ENCODE measurements at regions of chr10 and their contacts with region 1.

Region 1: GRCh38 chr10:77939561-77940001 is 13.0 kb upstream of the DLG5 start:
- H3K4me3 ChIP-seq: no peak overlapping the region
- H3K27ac ChIP-seq: no peak overlapping the region
- H3K4me1 ChIP-seq: no peaks in the 10 kb centered on the region
- CTCF ChIP-seq: no peak

Region 2: GRCh38 chr10:77574438-77574837 is 365.1 kb before region 1 on chr10:
- CTCF ChIA-PET with region 1: no interaction called
- POLR2A ChIA-PET with region 1: no interaction called
- H3K4me3 ChIP-seq: no peak overlapping the region
- H3K27ac ChIP-seq: no peak overlapping the region
- H3K4me1 ChIP-seq: no peaks in the 10 kb centered on the region
- CTCF ChIP-seq: no peak

Region 3: DNA sequence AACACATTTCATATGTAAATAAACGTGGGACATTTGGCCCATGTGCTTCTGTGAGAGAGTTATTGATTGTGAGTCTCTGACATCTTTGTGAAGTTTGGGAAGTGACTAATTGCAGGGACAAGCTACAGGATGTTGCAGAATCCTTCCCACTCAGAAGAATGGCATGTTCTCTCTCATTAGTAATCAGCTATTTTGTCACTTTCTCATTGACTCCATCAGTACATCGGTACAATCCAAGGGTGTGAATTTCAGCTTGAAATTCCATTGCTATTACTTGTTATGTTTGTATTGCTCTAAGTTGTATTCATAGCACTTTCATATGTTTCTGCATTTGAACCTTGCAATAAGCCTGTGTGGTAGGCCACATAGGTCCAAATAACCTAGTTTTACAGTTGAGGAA is 202.0 kb before region 1 on chr10:
- CTCF ChIA-PET with region 1: no interaction called
- POLR2A ChIA-PET with region 1: no interaction called
- H3K4me3 ChIP-seq: no peak overlapping the region
- H3K27ac ChIP-seq: no peak overlapping the region
- H3K4me1 ChIP-seq: no peaks in the 10 kb centered on the region
- CTCF ChIP-seq: no peak

Region 4: GRCh38 chr10:77926566-77927401 is 12.8 kb before region 1 on chr10 and contains the start of gene DLG5:
- CTCF ChIA-PET with region 1: no interaction called
- POLR2A ChIA-PET with region 1: interaction called, 10 read pairs
- H3K4me3 ChIP-seq: peak within 1 kb of the TSS; percentile 85
- H3K27ac ChIP-seq: peak within 1 kb of the TSS; percentile 73; the same call in 1 of the 2 replicates
- H3K4me1 ChIP-seq: peaks cover 6% of the 10 kb centered on the region; the same call in 1 of the 2 replicates
- CTCF ChIP-seq: no peak

Region 5: DNA sequence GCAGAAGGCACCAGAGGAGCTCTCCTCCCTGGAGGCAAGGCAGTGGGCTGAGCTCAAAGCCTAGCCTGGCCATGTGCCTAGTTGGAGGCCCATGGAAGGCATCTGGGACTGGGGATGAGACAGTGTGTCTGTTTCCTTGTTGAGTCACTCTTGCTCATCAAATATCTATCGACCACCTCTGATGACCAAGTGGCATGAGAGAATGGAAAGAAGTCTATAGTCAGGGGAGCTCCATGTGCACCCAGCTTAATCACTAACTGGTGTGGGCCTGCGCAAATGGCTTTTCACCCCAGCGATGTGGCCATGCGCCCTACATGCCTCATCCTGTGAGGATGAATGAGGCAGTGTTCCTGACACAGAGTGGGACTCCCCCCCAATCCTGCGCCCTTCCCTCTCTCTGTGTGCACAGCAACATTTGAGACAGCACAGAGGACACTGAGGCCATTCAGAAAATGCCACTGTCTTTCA is 324.0 kb after region 1 on chr10:
- CTCF ChIA-PET with region 1: no interaction called
- POLR2A ChIA-PET with region 1: no interaction called
- H3K4me3 ChIP-seq: no peak overlapping the region
- H3K27ac ChIP-seq: no peak overlapping the region
- H3K4me1 ChIP-seq: peaks cover 5% of the 10 kb centered on the region; the same call in 1 of the 2 replicates
- CTCF ChIP-seq: no peak

Measured in HEK293 (cell line).